Head of caudate nucleus (tissue), 42 donors: ENCODE measurements at regions of chr6 and their contacts with region 1.

Region 1: GRCh38 chr6:6547110-6547879 is 41.2 kb upstream of the LY86 start:
- DNase-seq: peak; percentile 67 to 96 (median 92)

Region 2: DNA sequence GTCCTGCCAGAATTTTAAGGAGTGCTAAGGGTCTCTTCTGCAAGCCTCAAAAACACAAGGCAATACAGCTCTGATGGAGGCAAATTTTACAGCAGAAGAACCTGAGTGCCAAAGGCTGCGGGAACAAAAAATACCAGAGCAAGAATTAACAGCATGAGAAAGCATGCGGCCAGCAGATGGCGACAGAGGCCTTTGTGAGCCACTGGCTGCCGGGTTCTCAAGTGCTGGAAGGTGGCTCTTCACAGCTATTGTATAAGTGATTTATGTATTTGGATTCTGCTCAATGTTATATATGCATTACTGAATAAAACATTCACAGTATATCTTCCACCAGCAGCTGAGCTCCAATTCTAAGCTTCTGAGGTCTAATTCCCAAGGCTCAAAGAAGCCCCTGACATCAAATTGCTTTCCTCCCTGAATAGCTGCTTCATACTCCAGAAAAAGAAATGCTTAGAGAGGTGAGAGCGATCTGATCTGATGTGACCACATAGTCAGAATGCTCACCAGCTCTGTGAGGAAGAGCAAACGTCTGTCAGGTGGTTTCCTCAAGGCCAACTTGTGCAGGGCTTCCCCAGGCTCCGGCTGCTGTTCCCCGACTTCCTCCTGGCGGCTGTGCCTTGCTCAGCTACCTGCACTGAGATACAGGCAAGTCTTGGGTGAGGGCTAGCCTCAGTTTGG is 1403.5 kb before region 1 on chr6:
- intact Hi-C with region 1: loop called (anchors 10 kb)
- DNase-seq: peak; percentile 78 to 97 (median 93)

Region 3: DNA sequence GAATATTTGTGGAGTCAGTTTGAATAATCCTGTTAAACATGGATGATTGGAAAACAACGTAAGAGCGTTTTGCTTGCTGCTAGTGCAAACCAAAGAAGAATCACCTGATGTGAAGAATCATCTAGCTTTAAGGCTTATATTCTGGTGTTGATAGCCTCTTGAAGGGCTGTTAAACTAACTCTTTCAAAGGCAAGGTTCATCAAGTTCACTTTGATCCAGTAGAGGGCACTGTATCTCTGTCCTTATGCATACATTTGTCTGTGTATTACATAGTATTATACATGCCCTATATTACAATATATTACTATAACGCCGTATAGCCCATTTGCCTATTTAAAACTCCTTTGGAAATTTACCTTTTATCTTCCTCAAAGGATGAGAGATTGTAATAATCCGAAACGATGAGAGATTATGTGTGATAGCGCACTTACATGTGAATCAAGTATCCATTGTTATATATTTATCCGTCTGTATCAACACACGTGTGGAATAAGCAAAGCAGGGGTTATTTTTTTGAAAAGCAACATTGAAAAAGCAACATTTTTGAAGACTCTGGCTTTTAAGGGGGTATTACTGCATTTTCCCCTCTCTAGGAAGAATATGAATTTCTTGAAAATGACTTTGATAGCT is 489.8 kb before region 1 on chr6:
- intact Hi-C with region 1: loop called (anchors 10 kb)
- DNase-seq: peak in 9 of 42 donors; percentile 8 to 52 (median 29)

Region 4: GRCh38 chr6:6466967-6467761 is 80.1 kb before region 1 on chr6:
- intact Hi-C with region 1: no loop called
- DNase-seq: peak; percentile 10 to 87 (median 50)